B cell (primary cell): ENCODE measurements at regions of chr2 and their contacts with region 1.

Region 1: GRCh38 chr2:68807821-68808266 is 63.4 kb downstream of the BMP10 start:
- DNase-seq: no peak
- ATAC-seq: no peak
- H3K4me3 ChIP-seq: no peak overlapping the region
- H3K4me3 Mint-ChIP-seq: no peak overlapping the region
- H3K27ac ChIP-seq: peak overlapping the region; percentile 23 to 84
- H3K27ac Mint-ChIP-seq: peak overlapping the region; percentile 89
- H3K4me1 ChIP-seq: peaks cover 28 to 29% of the 10 kb centered on the region in 2 donors
- H3K4me1 Mint-ChIP-seq: peaks cover 61% of the 10 kb centered on the region
- H3K27me3 ChIP-seq: no peaks in the 10 kb centered on the region
- H3K27me3 Mint-ChIP-seq: no peaks in the 10 kb centered on the region
- CTCF ChIP-seq: no peak

Region 2: GRCh38 chr2:68774569-68775271 is 33.1 kb before region 1 on chr2:
- CTCF ChIA-PET with region 1: interaction called, 19 read pairs
- POLR2A ChIA-PET with region 1: interaction called, 4 read pairs
- intact Hi-C with region 1: loop called (anchors 5 kb)
- DNase-seq: peak; percentile 91
- ATAC-seq: peak; percentile 80
- H3K4me3 ChIP-seq: peak overlapping the region; percentile 79 to 96 (median 91)
- H3K4me3 Mint-ChIP-seq: peak overlapping the region; percentile 99
- H3K27ac ChIP-seq: peak overlapping the region; percentile 93 to 99
- H3K27ac Mint-ChIP-seq: peak overlapping the region; percentile 98
- H3K4me1 ChIP-seq: peaks cover 83 to 88% of the 10 kb centered on the region in 2 donors
- H3K4me1 Mint-ChIP-seq: peaks cover 80% of the 10 kb centered on the region
- H3K27me3 ChIP-seq: no peaks in the 10 kb centered on the region
- H3K27me3 Mint-ChIP-seq: no peaks in the 10 kb centered on the region
- CTCF ChIP-seq: no peak